AG04450 (cell line): ENCODE measurements at regions of chr19 and their contacts with region 1.

Region 1: DNA sequence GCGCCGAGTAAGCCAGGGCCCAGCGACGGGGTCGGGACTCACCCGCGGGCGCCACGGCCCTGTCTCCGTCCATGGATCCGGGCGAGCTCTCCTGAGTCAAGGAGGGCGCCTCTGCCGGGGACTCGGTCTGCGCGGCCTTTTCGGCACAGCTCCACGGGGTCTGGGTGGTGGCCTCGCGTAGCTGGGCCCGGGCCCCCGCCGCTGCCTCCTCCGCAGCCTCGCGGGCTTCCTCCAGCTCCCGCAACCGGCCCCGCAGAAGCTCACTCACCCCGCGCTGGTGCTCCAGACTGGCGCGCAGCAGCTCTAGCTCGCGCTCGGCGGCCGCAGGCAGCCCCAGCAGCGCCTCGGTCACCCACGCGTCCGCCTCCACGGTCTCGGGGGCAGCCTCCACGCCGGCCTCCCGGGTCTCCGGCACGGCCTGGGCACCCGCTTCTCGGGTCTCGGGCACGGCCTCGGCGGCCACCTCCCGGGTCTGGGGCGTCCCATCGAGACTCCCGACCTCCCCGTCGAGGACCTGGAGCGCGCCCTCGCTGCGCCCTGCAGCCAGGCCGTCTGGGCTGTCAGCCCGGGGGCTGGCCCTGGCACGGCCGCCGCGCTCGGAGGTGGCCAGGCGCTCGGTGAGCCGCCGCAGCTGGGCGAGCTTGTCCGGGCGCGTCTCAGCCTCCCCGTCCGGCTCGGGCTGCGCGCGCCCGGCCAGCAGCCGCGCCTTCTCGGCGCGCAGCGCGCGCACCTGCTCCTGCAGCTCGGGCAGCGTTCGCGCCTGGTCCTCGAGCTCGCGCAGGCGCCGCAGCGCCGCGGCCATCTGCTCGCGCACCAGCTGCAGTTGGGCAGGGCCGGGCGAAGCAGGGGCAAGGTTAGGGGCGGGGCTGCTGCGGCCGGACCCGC is 8.4 kb downstream of the KANK3 start:
- DNase-seq: no peak
- H3K4me3 ChIP-seq: peak overlapping the region; percentile 32; the same call in 1 of the 2 replicates
- H3K27ac ChIP-seq: no peak overlapping the region
- H3K27me3 ChIP-seq: peaks cover 27% of the 10 kb centered on the region
- CTCF ChIP-seq: no peak

Region 2: GRCh38 chr19:8208119-8208921 is 126.4 kb before region 1 on chr19:
- CTCF ChIA-PET with region 1: no interaction called
- POLR2A ChIA-PET with region 1: no interaction called
- DNase-seq: no peak
- H3K4me3 ChIP-seq: peak overlapping the region; percentile 44
- H3K27ac ChIP-seq: no peak overlapping the region
- H3K27me3 ChIP-seq: peaks cover 28% of the 10 kb centered on the region
- CTCF ChIP-seq: no peak

Region 3: GRCh38 chr19:8321060-8321985 is 13.4 kb before region 1 on chr19 and contains the starts of genes NDUFA7 and RPS28:
- CTCF ChIA-PET with region 1: no interaction called
- POLR2A ChIA-PET with region 1: interaction called, 11 read pairs
- DNase-seq: peak; percentile 94
- H3K4me3 ChIP-seq: peak within 1 kb of the TSS; percentile 99
- H3K27ac ChIP-seq: peak within 1 kb of the TSS; percentile 80
- H3K27me3 ChIP-seq: no peaks in the 10 kb centered on the region
- CTCF ChIP-seq: 0 out of 2 replicates have a peak, but pooled peaks have one; percentile 14
- polyA plus RNA-seq, gene NDUFA7: 31.5 and 46.1 TPM in 2 replicates
- polyA plus RNA-seq, gene RPS28: 424 and 658 TPM in 2 replicates